ENCODE measurements at regions of chr11 and their contacts with region 1.

Region 1: GRCh38 chr11:77127232-77127911 is 674 bp upstream of the MYO7A start:
- DNase-seq: no peak
- H3K4me3 ChIP-seq: peak overlapping the region; percentile 37
- H3K27me3 ChIP-seq: no peaks in the 10 kb centered on the region
- CTCF ChIP-seq: peak; percentile 100

Region 2: GRCh38 chr11:77091146-77091940 is 36.0 kb before region 1 on chr11:
- CTCF ChIA-PET with region 1: interaction called, 14 read pairs
- POLR2A ChIA-PET with region 1: no interaction called
- DNase-seq: no peak
- H3K4me3 ChIP-seq: no peak overlapping the region
- H3K27me3 ChIP-seq: no peaks in the 10 kb centered on the region
- CTCF ChIP-seq: peak; percentile 93

Region 3: DNA sequence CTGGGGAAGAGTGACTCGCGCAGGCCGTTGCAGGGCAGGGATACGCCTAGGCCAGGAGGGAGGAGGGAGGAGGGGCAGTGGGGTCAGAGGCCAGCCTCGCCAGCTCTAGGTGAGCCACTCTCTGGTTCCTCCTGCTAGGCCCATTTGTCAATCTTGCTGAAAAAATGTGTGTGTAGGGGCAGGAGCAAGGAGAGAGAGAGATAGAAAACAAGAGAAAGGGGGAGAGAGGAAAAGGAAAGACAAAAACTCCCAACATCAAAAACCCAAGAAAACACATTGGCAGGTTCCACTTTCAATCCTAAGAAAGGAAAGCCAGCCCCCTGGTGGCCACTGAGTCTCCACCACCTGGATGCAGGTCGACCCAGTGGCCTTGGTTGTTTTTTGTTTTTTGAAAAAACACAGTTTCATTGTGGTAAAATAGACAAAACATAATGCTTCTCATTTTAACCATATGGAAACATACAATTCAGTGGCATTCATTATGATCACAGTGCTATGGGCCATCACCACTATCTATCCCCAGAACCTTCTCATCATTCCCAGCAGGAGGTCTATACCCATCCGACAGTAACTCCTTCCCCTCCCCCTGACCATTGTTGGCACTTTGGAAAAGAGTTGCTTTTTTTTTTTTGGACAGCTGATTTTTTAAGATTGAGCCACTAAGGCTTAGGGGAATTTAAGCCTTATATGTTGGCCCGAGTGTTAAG is 13.8 kb before region 1 on chr11:
- CTCF ChIA-PET with region 1: interaction called, 71 read pairs
- POLR2A ChIA-PET with region 1: no interaction called
- DNase-seq: no peak
- H3K4me3 ChIP-seq: no peak overlapping the region
- H3K27me3 ChIP-seq: no peaks in the 10 kb centered on the region
- CTCF ChIP-seq: peak; percentile 74

Region 4: DNA sequence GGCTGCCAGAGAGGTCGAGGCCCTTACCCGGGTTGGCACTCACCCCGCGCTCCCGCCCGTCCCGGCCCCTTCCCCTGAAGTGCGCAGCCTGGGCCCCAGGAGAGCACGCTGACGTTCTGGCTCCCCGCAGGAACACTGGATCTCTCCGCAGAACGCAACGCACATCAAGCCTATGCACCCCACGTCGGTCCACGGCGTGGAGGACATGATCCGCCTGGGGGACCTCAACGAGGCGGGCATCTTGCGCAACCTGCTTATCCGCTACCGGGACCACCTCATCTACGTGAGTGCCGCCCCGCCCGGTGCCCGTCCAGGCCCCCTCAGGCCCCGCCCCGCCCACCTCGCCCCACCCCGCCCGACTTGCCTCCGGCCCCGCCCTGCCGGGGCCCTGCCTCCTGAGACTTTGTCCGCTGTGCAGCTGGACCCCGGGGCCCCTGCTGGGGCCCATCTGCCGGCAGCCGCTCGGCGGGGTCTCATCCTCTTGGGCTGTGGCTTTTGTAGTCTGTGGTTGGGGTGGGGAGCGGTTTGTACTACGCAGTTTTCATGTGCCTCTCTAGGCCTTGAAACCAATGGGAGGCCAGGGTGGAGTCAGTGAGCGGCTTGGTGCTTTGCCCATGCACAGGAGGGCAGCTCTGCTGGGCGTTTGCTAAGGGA is 20.4 kb after region 1 on chr11:
- CTCF ChIA-PET with region 1: interaction called, 24 read pairs
- POLR2A ChIA-PET with region 1: no interaction called
- DNase-seq: no peak
- H3K4me3 ChIP-seq: no peak overlapping the region
- H3K27me3 ChIP-seq: peaks cover 14% of the 10 kb centered on the region
- CTCF ChIP-seq: no peak

Region 5: DNA sequence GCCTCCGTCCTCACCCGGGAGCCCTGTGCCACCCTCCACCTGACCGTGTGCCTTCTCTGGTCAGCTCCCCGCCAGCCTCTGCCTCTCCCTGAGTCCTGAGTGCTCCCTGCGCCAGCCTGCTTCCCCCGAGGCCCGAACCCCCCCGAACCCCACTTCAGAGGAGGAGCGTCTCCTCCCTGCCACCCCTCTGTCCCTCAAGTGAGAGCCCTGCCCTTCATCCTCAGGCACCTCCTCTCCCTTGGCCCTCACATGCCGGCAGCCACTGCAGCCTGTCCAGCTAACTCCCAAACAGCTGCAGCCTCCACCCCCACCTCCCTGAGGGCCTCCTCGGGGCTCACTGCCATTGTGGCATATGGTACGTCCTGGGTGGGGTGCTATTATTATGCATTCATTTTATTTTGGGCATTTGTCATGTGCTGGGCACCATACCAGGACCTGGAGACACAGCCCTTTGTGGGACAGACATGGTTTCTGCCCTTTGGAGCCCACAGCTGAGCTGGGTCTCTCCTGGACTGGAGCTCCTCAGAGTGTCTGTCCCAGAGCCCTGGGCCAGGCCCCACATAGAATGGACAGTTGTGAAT is 67.9 kb after region 1 on chr11:
- CTCF ChIA-PET with region 1: interaction called, 167 read pairs
- POLR2A ChIA-PET with region 1: no interaction called
- DNase-seq: no peak
- H3K4me3 ChIP-seq: no peak overlapping the region
- H3K27me3 ChIP-seq: no peaks in the 10 kb centered on the region; the same call in 1 of the 2 replicates
- CTCF ChIP-seq: no peak

Region 6: DNA sequence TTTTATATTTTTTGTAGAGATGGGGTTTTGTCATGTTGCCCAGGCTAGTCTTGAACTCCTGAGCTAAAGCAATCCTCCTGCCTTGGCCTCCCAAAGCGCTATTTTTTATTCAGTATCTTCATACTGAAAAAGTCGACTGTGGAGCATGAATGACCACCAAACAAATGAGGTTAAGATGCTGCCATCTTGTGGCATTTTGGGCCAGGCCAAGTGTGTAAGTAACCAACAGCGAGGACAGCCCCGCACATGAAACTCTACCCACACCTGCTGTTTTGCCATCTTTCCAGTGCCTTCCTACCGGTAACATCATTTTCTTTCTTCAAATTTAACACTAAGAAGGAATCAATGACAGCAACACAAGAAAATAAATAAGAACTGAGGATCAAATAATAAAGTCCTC is 430.2 kb after region 1 on chr11:
- CTCF ChIA-PET with region 1: interaction called, 16 read pairs
- POLR2A ChIA-PET with region 1: no interaction called
- DNase-seq: no peak
- H3K4me3 ChIP-seq: no peak overlapping the region
- H3K27me3 ChIP-seq: no peaks in the 10 kb centered on the region
- CTCF ChIP-seq: no peak; the same call in 1 of the 2 replicates

Region 7: DNA sequence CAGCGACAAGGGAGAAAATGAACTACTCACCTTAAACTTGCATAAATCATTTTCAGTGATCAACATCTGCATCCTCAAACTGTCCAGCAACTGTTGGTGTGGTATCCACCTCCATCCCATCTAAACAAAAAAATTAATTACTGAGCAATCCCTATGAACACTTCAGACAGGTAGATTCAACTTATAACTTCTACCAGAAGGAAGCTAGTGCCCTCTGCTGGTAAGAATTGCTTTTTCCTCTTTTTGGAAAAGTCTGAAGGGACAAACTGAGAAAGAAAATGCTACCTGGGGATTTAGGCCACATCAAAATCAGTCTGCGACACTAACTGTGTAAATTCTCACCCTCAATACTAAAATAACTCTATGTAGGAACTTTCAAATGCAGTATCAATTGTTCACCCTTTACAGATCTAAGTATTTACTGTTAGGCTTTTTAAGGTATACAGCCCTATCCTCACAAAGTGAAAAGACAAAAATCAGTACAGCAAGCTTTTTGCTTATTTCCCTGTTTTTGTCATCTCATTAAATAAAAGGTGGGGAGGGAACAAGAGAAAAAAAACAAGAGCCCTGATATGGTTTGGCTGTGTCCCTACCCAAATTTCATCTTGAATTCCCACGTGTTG is 492.3 kb after region 1 on chr11:
- CTCF ChIA-PET with region 1: interaction called, 48 read pairs
- POLR2A ChIA-PET with region 1: no interaction called
- DNase-seq: no peak
- H3K4me3 ChIP-seq: no peak overlapping the region
- H3K27me3 ChIP-seq: no peaks in the 10 kb centered on the region
- CTCF ChIP-seq: peak; percentile 75

Measured in BJ (cell line).